Colonic mucosa (tissue), 4 donors: ENCODE measurements at regions of chrX and their contacts with region 1.

Region 1: GRCh38 chrX:129843459-129844306 is at the start of gene ZDHHC9:
- DNase-seq: peak; percentile 89
- H3K4me3 ChIP-seq: peak within 1 kb of the TSS; percentile 74
- H3K27ac ChIP-seq: peak within 1 kb of the TSS; percentile 69
- H3K4me1 ChIP-seq: no peaks in the 10 kb centered on the region
- H3K27me3 ChIP-seq: no peaks in the 10 kb centered on the region
- CTCF ChIP-seq: no peak
- total RNA-seq, gene ZDHHC9: 39.5 to 41.5 TPM

Region 2: DNA sequence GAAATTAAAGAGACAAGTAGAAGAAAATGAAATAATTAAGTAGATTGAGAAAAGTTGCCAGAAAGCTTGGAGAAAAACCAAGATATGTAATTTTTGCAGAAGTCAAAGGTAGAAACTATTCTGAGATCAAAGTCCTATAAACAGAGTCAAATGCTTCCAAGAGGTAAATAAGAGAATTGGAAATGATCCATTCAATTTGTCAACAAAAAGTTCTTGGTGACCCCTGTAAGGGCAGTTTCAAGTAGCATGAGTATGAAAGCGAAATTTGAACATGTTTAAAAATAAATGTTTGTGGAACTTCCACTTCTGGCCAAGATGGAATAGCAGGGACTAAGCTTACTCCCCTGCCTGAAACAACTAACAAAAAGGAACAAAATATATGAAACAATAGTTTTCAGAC is 882.4 kb before region 1 on chrX:
- intact Hi-C with region 1: no loop called
- DNase-seq: no peak
- H3K4me3 ChIP-seq: no peak overlapping the region
- H3K27ac ChIP-seq: no peak overlapping the region
- H3K4me1 ChIP-seq: no peaks in the 10 kb centered on the region
- H3K27me3 ChIP-seq: no peaks in the 10 kb centered on the region
- CTCF ChIP-seq: no peak

Region 3: DNA sequence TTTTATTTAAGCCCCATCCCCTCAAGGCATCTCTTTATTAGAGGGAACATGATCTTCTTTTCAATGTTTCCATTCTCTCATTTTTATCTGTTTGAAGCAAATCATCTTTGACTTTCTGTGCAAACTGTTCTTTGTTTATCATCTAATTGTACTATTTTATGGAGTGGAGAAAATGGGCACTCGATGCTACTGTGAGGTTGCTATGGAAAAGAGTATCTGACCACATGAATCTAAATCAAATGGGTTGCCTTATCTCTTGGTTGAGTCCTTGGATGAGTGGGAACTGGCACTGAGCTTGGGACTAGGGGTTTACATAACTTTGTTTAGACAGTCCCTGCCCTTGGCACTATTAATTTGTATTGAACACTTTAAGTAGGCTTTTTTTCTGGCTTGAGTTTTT is 294.6 kb before region 1 on chrX:
- intact Hi-C with region 1: no loop called
- DNase-seq: no peak
- H3K4me3 ChIP-seq: no peak overlapping the region
- H3K27ac ChIP-seq: no peak overlapping the region
- H3K4me1 ChIP-seq: no peaks in the 10 kb centered on the region
- H3K27me3 ChIP-seq: no peaks in the 10 kb centered on the region
- CTCF ChIP-seq: no peak

Region 4: DNA sequence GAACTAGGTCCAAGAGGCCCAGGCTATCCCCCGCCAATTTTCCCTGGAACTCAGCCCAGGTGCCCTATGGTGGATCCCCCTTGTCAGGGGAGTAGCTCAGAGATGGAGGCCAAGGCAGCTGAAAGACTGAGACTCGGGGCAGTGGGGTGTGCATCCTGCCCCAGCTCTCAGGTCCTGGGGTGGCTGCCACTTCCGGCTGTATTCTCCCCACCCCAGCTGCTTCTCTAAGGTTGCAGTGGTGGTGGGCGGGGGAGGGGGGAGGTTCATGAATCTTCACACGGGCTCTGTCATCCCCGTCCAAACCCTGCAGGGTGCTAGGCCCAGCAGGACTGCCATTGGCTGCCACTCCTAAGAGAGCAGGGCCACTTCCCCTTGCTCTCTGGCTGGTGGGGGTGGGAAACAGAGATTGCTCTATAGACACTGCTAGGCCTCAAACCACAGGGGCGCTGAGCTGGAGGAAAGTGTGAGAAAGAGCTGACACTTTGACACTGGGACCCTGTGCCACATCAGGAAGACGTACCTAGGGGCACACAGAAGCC is 62.5 kb before region 1 on chrX:
- intact Hi-C with region 1: no loop called
- DNase-seq: no peak
- H3K4me3 ChIP-seq: peak overlapping the region; percentile 12
- H3K27ac ChIP-seq: peak overlapping the region; percentile 61
- H3K4me1 ChIP-seq: no peaks in the 10 kb centered on the region
- H3K27me3 ChIP-seq: no peaks in the 10 kb centered on the region
- CTCF ChIP-seq: no peak

Region 5: DNA sequence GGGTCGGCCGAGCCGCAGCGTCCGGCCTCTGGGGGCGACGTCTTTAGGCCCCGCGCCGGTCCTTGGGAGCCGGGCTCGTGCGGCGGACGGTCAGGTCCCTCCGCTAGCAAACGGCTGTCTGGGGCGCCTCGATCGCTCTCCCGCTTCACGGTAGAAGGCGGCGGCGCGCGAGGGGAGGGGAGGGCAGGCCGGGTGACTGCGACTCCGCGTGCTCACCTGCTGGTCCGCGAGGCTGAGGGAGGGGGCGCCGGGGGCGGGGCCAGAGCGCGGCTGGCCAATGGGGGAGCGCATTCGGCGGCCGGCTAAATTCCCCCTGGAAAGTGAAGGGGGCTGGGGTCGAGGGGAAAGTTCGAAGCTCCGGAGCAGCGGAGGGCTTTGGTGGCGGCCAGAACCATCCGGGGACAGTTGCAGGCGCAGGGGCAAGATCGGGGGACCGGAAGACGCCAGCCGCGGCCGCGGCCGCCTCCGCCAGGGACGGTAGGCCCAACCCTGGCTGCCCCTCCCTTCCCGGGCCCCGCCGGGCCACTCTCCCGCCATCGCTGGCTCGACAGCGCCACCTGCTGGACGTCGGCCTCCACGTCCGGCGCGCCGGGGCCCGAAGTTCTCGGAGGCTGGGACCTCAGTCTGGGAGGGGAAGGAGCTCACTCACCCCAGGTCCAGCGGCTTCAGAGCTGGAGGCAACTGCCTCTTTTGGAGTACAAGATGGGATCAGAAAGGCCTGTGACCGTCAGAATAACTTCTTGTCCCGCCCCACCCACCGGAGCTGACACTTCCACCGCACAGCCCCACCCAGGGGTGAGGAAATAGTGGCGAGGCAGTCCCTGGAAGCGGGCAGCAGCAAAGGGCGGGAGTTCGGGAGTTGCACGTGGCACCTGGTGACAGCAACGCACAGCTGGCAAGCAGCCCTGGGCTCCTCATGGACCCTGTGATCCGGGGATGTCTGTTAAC is 216.7 kb after region 1 on chrX:
- intact Hi-C with region 1: loop called (anchors 10 kb)
- DNase-seq: peak; percentile 86
- H3K4me3 ChIP-seq: peak overlapping the region; percentile 27
- H3K27ac ChIP-seq: no peak overlapping the region
- H3K4me1 ChIP-seq: no peaks in the 10 kb centered on the region
- H3K27me3 ChIP-seq: no peaks in the 10 kb centered on the region
- CTCF ChIP-seq: peak; percentile 79